Posterior vena cava (tissue), 2 donors: ENCODE measurements at regions of chr6 and their contacts with region 1.

Region 1: GRCh38 chr6:95795927-95796326 is 218.6 kb downstream of the MANEA start:
- DNase-seq: no peak

Region 2: DNA sequence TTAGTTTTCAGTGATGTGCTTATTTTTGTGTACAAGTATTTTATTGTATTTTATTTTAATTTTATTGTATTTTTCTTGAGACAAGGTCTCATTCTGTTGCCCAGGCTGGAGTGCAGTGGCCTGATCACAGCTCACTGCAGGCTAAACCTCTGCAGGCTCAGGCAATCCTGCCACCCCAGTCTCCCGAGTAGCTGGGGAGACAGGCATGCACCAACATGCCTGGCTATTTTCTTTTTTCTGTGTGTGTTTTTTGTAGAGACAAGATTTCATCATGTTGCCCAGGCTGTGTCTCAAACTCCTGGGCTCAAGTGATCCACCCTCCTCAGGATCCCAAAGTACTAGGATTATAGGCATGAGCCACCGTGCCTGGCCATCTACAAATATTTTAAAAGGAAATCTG is 72.3 kb before region 1 on chr6:
- intact Hi-C with region 1: no loop called
- DNase-seq: no peak

Region 3: GRCh38 chr6:95815389-95816056 is 19.6 kb after region 1 on chr6:
- intact Hi-C with region 1: loop called in 1 of 2 experiments (anchors 2 kb)
- DNase-seq: no peak